PC-3 (cell line): ENCODE measurements at regions of chr10 and their contacts with region 1.

Region 1: GRCh38 chr10:34528320-34528719 is 286.8 kb downstream of the PARD3 start:
- DNase-seq: peak; percentile 100
- ATAC-seq: peak; percentile 75
- H3K4me3 ChIP-seq: peak overlapping the region; percentile 23
- H3K27ac ChIP-seq: peak overlapping the region; percentile 85
- H3K4me1 ChIP-seq: peaks cover 55% of the 10 kb centered on the region
- H3K27me3 ChIP-seq: no peaks in the 10 kb centered on the region
- CTCF ChIP-seq: no peak

Region 2: DNA sequence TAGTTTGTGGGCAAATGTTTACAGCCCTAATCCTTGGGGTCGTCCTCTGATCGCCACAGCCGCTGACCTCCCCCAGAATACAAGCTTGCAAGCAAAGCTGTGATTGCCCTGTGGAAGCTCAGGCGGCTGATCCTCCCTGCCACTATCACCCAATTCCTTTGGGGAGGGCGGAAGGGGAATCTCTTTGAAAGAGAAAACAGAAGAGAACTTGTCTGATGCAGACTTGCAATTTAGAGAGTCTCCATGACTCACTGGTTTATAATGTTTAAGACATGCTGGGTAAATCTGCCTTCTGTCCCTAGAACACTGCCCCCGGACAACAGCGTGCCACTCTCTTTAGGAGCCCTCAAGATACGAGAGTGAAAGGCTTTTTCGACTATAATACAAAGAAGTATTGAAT is 1269.4 kb before region 1 on chr10:
- CTCF ChIA-PET with region 1: no interaction called
- POLR2A ChIA-PET with region 1: no interaction called
- intact Hi-C with region 1: loop called (anchors 5 kb)
- DNase-seq: peak; percentile 98
- ATAC-seq: peak; percentile 52
- H3K4me3 ChIP-seq: no peak overlapping the region
- H3K27ac ChIP-seq: peak overlapping the region; percentile 65
- H3K4me1 ChIP-seq: peaks cover 86% of the 10 kb centered on the region
- H3K27me3 ChIP-seq: no peaks in the 10 kb centered on the region
- CTCF ChIP-seq: no peak

Region 3: DNA sequence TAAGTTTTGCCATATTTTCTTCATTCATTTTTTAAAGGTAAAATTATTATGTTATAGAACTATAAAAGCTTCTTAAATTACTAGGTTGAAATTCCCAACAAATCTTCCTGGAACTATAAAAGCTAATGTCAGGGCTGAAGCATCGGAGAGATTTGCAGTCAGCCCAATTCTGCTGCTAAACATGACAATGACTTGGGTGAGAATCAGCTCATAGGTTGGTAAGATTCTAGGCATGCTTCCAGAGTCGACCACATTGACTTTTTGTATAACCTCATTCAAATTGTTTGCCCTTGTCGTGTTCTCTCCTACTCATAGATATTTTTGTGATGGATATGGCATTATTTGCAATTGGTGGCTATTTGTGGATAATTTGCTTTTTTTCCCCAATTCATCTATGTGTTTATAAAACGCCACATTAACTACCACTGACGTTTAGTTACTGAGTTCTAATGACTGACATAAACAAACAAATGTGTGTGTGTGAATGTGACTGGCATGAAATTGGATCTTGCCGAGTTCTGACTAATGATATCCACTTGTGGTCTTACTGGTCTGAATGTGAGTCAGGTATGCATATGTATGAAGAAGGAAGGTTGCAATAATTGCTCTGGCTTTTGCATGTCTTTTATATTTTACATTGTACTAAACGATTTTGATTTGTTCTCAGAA is 293.0 kb before region 1 on chr10:
- CTCF ChIA-PET with region 1: interaction called, 3 read pairs
- POLR2A ChIA-PET with region 1: no interaction called
- intact Hi-C with region 1: loop called (anchors 1 kb)
- DNase-seq: peak; percentile 100
- ATAC-seq: peak; percentile 100
- H3K4me3 ChIP-seq: peak overlapping the region; percentile 42
- H3K27ac ChIP-seq: peak overlapping the region; percentile 47
- H3K4me1 ChIP-seq: peaks cover 18% of the 10 kb centered on the region
- H3K27me3 ChIP-seq: no peaks in the 10 kb centered on the region
- CTCF ChIP-seq: no peak

Region 4: GRCh38 chr10:34280599-34281374 is 247.5 kb before region 1 on chr10:
- CTCF ChIA-PET with region 1: no interaction called
- POLR2A ChIA-PET with region 1: no interaction called
- intact Hi-C with region 1: loop called (anchors 5 kb)
- DNase-seq: peak; percentile 100
- ATAC-seq: peak; percentile 99
- H3K4me3 ChIP-seq: peak overlapping the region; percentile 35; the same call in 1 of the 2 replicates
- H3K27ac ChIP-seq: peak overlapping the region; percentile 54
- H3K4me1 ChIP-seq: peaks cover 22% of the 10 kb centered on the region
- H3K27me3 ChIP-seq: no peaks in the 10 kb centered on the region
- CTCF ChIP-seq: peak; percentile 40; the same call in 1 of the 2 replicates

Region 5: GRCh38 chr10:34351161-34351560 is 177.2 kb before region 1 on chr10:
- CTCF ChIA-PET with region 1: no interaction called
- POLR2A ChIA-PET with region 1: no interaction called
- intact Hi-C with region 1: no loop called
- DNase-seq: no peak
- ATAC-seq: peak; percentile 20; the same call in 1 of the 2 replicates
- H3K4me3 ChIP-seq: no peak overlapping the region
- H3K27ac ChIP-seq: no peak overlapping the region
- H3K4me1 ChIP-seq: no peaks in the 10 kb centered on the region
- H3K27me3 ChIP-seq: no peaks in the 10 kb centered on the region
- CTCF ChIP-seq: no peak

Region 6: DNA sequence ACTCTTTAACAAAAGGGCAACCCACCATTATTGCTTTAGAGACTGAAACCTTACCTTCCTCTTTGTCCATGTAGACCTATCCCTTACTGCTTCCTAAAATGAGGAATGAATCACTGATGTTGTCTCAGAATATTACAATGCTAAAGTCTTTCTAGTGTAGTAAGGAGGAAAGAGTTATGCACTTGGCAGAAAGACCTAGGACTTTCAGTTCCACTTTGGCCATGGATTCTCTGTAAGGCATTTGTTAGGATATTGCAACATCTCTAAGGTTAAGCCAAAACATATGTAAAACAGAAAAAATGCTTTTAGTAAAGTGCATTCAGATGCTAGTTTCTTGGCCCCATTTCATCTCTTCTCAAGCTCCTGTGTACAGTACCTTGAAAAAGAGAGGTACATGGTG is 55.8 kb after region 1 on chr10:
- CTCF ChIA-PET with region 1: interaction called, 14 read pairs
- POLR2A ChIA-PET with region 1: interaction called, 8 read pairs
- intact Hi-C with region 1: loop called (anchors 1 kb)
- DNase-seq: peak; percentile 72
- ATAC-seq: no peak
- H3K4me3 ChIP-seq: no peak overlapping the region
- H3K27ac ChIP-seq: no peak overlapping the region
- H3K4me1 ChIP-seq: peaks cover 74% of the 10 kb centered on the region
- H3K27me3 ChIP-seq: no peaks in the 10 kb centered on the region
- CTCF ChIP-seq: no peak